HCT116 (cell line): ENCODE measurements at regions of chr5 and their contacts with region 1.

Region 1: GRCh38 chr5:16489322-16489791 is 23.8 kb upstream of the ZNF622 start:
- DNase-seq: peak; percentile 21
- ATAC-seq: peak; percentile 83
- H3K4me3 ChIP-seq: no peak overlapping the region
- H3K27ac ChIP-seq: no peak overlapping the region
- H3K4me1 ChIP-seq: no peaks in the 10 kb centered on the region
- H3K27me3 ChIP-seq: no peaks in the 10 kb centered on the region
- CTCF ChIP-seq: peak; percentile 50 to 70 (median 56); a peak in 5 of 6 replicates
- POLR2A ChIP-seq: no peak
- RAD21 ChIP-seq: peak; percentile 73

Region 2: GRCh38 chr5:16265141-16265540 is 224.2 kb before region 1 on chr5:
- CTCF ChIA-PET with region 1: no interaction called
- POLR2A ChIA-PET with region 1: no interaction called
- RAD21 ChIA-PET with region 1: no interaction called
- intact Hi-C with region 1: no loop called
- DNase-seq: no peak
- ATAC-seq: no peak
- H3K4me3 ChIP-seq: no peak overlapping the region
- H3K27ac ChIP-seq: no peak overlapping the region
- H3K4me1 ChIP-seq: no peaks in the 10 kb centered on the region
- H3K27me3 ChIP-seq: no peaks in the 10 kb centered on the region
- CTCF ChIP-seq: no peak
- POLR2A ChIP-seq: no peak
- RAD21 ChIP-seq: no peak

Region 3: DNA sequence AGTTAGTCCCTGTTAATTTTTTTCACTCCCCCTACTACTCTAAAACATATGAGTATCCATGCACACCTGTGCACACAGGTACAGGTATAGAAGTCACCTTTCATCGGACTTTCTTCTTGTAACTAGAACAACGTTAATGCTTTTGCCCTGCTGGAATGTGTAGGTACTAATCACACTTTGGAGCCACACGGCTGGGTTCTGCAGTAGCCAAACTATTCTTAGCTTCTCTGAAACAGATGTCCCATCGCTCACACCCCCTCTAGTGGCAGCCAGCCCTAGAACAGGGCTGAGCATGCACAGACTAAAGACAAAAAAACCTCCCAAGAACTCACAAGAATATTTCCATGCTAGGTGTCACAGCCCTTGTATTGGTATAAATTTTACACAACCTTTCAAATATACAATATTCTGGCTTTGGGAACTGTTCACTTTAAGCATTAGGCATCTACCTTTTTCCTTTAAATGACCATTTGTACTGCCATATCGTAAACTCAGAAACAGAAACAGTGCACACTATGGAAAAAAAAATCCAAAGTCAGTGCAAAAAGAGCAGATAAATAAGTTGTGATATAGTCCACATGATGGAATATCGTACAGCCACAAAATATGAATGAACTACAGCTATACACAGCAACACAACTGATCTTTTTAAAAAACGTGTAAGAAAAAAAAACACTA is 63.4 kb after region 1 on chr5:
- CTCF ChIA-PET with region 1: interaction called, 20 read pairs
- POLR2A ChIA-PET with region 1: no interaction called
- RAD21 ChIA-PET with region 1: no interaction called
- intact Hi-C with region 1: loop called (anchors 1 kb)
- DNase-seq: peak; percentile 49
- ATAC-seq: peak; percentile 96
- H3K4me3 ChIP-seq: no peak overlapping the region
- H3K27ac ChIP-seq: no peak overlapping the region
- H3K4me1 ChIP-seq: peaks cover 2 to 6% of the 10 kb centered on the region in 2 experiments; a peak in 1 of 4 replicates
- H3K27me3 ChIP-seq: no peaks in the 10 kb centered on the region
- CTCF ChIP-seq: peak; percentile 41 to 96 (median 94); a peak in 5 of 6 replicates
- POLR2A ChIP-seq: no peak
- RAD21 ChIP-seq: peak; percentile 30; the same call in 1 of the 2 replicates

Region 4: DNA sequence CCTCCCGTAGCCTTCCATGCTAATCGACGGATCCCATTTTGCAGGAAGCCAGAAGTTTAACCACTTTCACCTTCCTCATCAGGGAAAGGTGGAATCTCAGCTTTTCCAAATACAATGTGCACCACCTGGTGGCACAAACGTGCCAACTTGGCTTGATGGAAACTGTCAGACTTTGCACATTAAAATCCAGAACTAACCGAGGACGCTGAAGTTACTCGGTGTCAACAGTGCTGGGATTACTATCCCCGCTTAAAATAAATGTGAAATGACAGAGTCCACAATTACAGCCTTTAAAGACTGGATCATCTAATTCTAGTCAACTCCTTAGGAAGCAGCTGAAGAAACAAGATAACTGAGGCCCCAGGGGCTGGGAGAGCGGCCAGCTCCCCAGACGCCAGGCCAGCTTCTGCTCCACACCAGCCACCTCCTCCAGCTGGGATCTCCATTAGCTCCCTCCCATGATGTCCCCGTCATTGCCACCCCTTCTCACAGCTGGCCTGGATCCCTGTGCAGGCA is 177.6 kb after region 1 on chr5:
- CTCF ChIA-PET with region 1: interaction called, 5 read pairs
- POLR2A ChIA-PET with region 1: no interaction called
- RAD21 ChIA-PET with region 1: no interaction called
- intact Hi-C with region 1: loop called (anchors 1 kb)
- DNase-seq: no peak
- ATAC-seq: peak; percentile 34; the same call in 1 of the 2 replicates
- H3K4me3 ChIP-seq: no peak overlapping the region
- H3K27ac ChIP-seq: no peak overlapping the region
- H3K4me1 ChIP-seq: no peaks in the 10 kb centered on the region
- H3K27me3 ChIP-seq: no peaks in the 10 kb centered on the region
- CTCF ChIP-seq: peak in 2 of 3 experiments; percentile 37 to 39; a peak in 4 of 6 replicates
- POLR2A ChIP-seq: no peak
- RAD21 ChIP-seq: peak; percentile 37; the same call in 1 of the 2 replicates